ENCODE measurements at regions of chr9 and their contacts with region 1.

Region 1: DNA sequence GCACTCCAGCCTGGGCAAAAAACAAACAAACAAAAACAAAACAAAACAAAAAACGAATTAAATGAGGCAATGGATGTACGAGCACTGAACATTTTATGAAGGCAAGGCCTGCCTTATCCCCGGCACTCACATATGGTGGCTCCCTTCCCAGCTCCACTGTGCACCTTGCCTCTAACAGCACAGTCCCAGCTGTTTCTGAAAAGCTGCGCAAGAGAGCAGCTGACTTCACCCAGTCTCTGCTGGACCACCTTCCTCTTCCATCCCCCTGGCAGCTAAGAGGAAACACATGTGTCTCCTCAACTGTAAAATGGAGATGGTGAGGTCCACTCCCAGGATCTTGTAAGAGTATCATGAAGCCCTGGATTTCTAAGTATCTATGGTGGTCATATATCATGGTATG is 100.7 kb downstream of the KLF4 start:
- DNase-seq: no peak

Region 2: DNA sequence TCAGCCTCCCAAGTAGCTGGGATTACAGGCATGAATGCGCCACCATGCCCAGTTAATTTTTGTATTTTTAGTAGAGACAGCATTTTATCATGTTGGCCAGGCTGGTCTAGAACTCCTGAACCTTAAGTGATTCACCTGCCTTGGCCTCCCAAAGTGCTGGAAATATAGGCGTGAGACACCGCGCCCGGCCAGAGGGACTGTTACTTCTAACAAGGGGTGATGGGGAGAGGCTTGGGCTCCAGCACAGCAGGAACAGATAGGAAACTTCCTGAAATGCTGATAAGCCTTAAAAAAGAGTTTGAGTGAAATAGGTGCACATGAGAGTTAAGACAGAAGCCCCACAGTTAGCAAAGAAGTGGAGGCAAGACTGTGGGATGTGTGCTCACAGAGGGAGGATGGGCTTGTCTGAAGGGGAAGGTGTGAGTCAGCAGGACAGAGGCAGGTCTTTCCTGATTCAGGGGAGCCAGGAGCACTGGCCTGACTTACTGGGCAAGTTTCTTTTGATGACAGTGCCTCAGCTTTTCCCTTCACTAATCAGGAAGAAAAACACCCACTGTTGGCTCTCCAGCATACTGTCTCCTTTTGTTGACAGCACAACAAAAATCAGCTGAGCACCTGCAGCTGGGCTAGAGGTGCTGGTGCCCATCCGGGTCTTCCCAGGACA is 37.4 kb before region 1 on chr9:
- intact Hi-C with region 1: no loop called
- DNase-seq: no peak

Region 3: GRCh38 chr9:107361816-107362215 is 27.1 kb before region 1 on chr9:
- intact Hi-C with region 1: loop called in 1 of 2 experiments (anchors 1 kb)
- DNase-seq: no peak

Region 4: GRCh38 chr9:108869092-108869725 is 1480.3 kb after region 1 on chr9:
- intact Hi-C with region 1: no loop called
- DNase-seq: no peak

Measured in posterior vena cava (tissue), 2 donors.